ENCODE measurements at regions of chr20 and their contacts with region 1.

Region 1: GRCh38 chr20:9616833-9617489 is 102.6 kb downstream of the LAMP5 start:
- DNase-seq: peak; percentile 66
- ATAC-seq: peak; percentile 81
- H3K4me3 ChIP-seq: no peak overlapping the region
- H3K27ac ChIP-seq: no peak overlapping the region
- H3K4me1 ChIP-seq: no peaks in the 10 kb centered on the region
- H3K27me3 ChIP-seq: peaks cover 17% of the 10 kb centered on the region
- CTCF ChIP-seq: peak; percentile 93
- POLR2A ChIP-seq: no peak
- RAD21 ChIP-seq: peak; percentile 87

Region 2: GRCh38 chr20:9407805-9408421 is 209.0 kb before region 1 on chr20:
- CTCF ChIA-PET with region 1: interaction called, 14 read pairs
- POLR2A ChIA-PET with region 1: no interaction called
- dilution Hi-C with region 1: no loop called
- in situ Hi-C with region 1: no loop called
- intact Hi-C with region 1: no loop called
- DNase-seq: peak; percentile 78
- ATAC-seq: peak; percentile 85
- H3K4me3 ChIP-seq: no peak overlapping the region
- H3K27ac ChIP-seq: no peak overlapping the region
- H3K4me1 ChIP-seq: peaks cover 8% of the 10 kb centered on the region
- H3K27me3 ChIP-seq: no peaks in the 10 kb centered on the region
- CTCF ChIP-seq: peak; percentile 89
- POLR2A ChIP-seq: 0 out of 2 replicates have a peak, but pooled peaks have one; percentile 21
- RAD21 ChIP-seq: peak; percentile 91

Region 3: GRCh38 chr20:9602847-9603183 is 14.1 kb before region 1 on chr20:
- CTCF ChIA-PET with region 1: no interaction called
- POLR2A ChIA-PET with region 1: no interaction called
- dilution Hi-C with region 1: no loop called
- in situ Hi-C with region 1: no loop called
- intact Hi-C with region 1: no loop called
- DNase-seq: no peak
- ATAC-seq: no peak
- H3K4me3 ChIP-seq: no peak overlapping the region
- H3K27ac ChIP-seq: no peak overlapping the region
- H3K4me1 ChIP-seq: no peaks in the 10 kb centered on the region
- H3K27me3 ChIP-seq: peaks cover 26% of the 10 kb centered on the region
- CTCF ChIP-seq: no peak
- POLR2A ChIP-seq: no peak
- RAD21 ChIP-seq: no peak

Region 4: DNA sequence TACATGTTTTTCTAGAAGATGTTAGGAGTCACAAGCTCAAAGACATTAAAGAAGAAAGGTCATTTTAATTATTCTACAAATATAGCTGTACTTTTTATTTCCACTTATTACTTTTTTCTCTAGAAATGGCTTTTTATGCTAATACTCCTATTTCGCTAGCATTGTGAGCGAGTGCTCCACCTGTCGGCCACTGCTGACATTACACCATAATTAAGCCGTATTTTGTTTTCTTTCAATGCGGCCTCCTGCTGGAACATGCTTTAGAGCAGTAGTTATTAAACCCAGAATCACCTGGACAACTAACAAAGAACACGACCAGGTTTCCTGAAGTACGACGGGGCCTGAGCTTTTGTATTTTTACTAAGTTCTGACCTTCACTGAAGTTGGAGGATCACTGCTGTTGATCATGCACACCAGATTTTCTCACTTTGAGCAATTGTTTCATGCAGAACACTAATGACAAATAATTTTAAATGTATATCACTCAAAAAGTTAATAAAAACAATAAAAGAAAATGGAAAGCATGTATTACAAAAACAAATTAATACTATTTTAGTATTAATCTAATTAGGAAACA is 296.0 kb after region 1 on chr20:
- CTCF ChIA-PET with region 1: interaction called, 19 read pairs
- POLR2A ChIA-PET with region 1: no interaction called
- dilution Hi-C with region 1: no loop called
- in situ Hi-C with region 1: loop called (anchors 5 kb)
- intact Hi-C with region 1: loop called (anchors 1 kb)
- DNase-seq: peak; percentile 42
- ATAC-seq: peak; percentile 86
- H3K4me3 ChIP-seq: no peak overlapping the region
- H3K27ac ChIP-seq: no peak overlapping the region
- H3K4me1 ChIP-seq: no peaks in the 10 kb centered on the region
- H3K27me3 ChIP-seq: peaks cover 4% of the 10 kb centered on the region
- CTCF ChIP-seq: peak; percentile 84
- POLR2A ChIP-seq: no peak
- RAD21 ChIP-seq: peak; percentile 60

Region 5: DNA sequence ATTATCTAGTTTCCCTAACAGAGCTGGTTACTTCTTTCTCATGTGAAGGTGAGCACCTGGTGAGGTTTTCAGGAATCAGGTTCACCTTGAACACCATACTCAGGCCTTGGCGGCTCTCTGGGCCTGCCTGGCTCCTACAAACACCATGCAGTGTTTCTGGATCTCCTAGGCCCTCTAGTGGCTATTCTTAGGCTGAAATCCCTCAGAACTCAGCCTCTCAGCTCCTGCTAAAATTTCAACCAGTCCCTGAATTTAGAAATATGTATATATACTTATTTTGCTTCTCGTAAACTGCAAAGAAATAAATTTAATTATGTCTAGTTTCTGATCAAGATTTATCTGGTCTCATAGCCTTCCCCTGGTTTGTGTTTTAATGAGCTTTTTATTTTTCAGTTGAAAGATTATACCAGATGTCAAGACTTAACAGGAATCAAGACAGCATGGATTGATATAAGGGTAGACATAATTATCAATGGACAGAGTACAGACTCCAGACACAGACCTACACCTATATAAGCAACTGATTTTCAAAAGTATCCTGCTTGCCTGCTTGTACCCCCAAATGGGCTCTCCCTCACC is 473.7 kb after region 1 on chr20:
- CTCF ChIA-PET with region 1: interaction called, 3 read pairs
- POLR2A ChIA-PET with region 1: no interaction called
- dilution Hi-C with region 1: no loop called
- in situ Hi-C with region 1: no loop called
- intact Hi-C with region 1: loop called (anchors 2 kb)
- DNase-seq: peak; percentile 53
- ATAC-seq: peak; percentile 90
- H3K4me3 ChIP-seq: no peak overlapping the region
- H3K27ac ChIP-seq: no peak overlapping the region
- H3K4me1 ChIP-seq: peaks cover 1% of the 10 kb centered on the region; the same call in 1 of the 2 replicates
- H3K27me3 ChIP-seq: no peaks in the 10 kb centered on the region; the same call in 1 of the 2 replicates
- CTCF ChIP-seq: peak; percentile 74
- POLR2A ChIP-seq: no peak
- RAD21 ChIP-seq: peak; percentile 70

Region 6: DNA sequence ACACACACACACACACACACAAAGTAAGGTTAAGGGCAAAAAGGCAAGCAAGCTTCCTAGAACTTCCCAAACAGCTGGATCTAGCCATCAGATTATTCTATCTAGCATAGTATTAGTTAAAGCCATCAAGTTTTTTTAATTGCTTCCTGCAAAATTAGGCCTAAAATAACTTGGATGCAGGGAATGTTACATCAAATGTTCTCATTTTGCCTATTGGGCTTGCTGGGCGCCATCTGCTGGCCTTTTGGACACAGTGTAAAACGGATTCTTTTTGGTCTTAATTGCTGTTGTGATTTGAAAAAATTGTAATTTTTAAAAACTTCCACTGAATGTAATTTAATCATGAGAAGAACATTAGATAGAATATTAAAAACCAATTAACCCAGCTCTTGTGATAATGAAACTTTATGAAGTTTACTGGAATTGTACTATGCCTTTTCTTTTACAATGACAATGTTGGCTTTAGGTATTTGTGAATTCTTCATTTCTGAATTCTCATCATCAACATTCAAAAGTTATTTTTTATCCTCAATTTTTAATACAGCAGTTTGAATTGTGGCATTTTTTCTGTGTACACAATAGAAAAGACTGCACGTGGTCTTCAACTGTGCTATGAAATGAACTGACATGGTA is 810.2 kb after region 1 on chr20:
- CTCF ChIA-PET with region 1: no interaction called
- POLR2A ChIA-PET with region 1: no interaction called
- dilution Hi-C with region 1: no loop called
- in situ Hi-C with region 1: no loop called
- intact Hi-C with region 1: loop called (anchors 2 kb)
- DNase-seq: peak; percentile 74
- ATAC-seq: peak; percentile 81
- H3K4me3 ChIP-seq: no peak overlapping the region
- H3K27ac ChIP-seq: no peak overlapping the region
- H3K4me1 ChIP-seq: peaks cover 2% of the 10 kb centered on the region; the same call in 1 of the 2 replicates
- H3K27me3 ChIP-seq: no peaks in the 10 kb centered on the region
- CTCF ChIP-seq: peak; percentile 83
- POLR2A ChIP-seq: no peak
- RAD21 ChIP-seq: peak; percentile 83

Measured in IMR-90 (cell line).